ENCODE measurements at regions of chr12 and their contacts with region 1.

Region 1: GRCh38 chr12:54368709-54369583 is 4.7 kb upstream of the GPR84 start:
- DNase-seq: peak; percentile 72 to 84
- H3K4me3 ChIP-seq: no peak overlapping the region
- H3K27ac ChIP-seq: no peak overlapping the region
- H3K4me1 ChIP-seq: peaks cover 13% of the 10 kb centered on the region
- H3K27me3 ChIP-seq: no peaks in the 10 kb centered on the region
- CTCF ChIP-seq: peak; percentile 93

Region 2: GRCh38 chr12:54259194-54260011 is 109.5 kb before region 1 on chr12:
- CTCF ChIA-PET with region 1: no interaction called
- POLR2A ChIA-PET with region 1: no interaction called
- intact Hi-C with region 1: loop called (anchors 10 kb)
- DNase-seq: no peak
- H3K4me3 ChIP-seq: no peak overlapping the region
- H3K27ac ChIP-seq: no peak overlapping the region
- H3K4me1 ChIP-seq: peaks cover 10% of the 10 kb centered on the region; the same call in 1 of the 2 replicates
- H3K27me3 ChIP-seq: no peaks in the 10 kb centered on the region
- CTCF ChIP-seq: no peak

Region 3: DNA sequence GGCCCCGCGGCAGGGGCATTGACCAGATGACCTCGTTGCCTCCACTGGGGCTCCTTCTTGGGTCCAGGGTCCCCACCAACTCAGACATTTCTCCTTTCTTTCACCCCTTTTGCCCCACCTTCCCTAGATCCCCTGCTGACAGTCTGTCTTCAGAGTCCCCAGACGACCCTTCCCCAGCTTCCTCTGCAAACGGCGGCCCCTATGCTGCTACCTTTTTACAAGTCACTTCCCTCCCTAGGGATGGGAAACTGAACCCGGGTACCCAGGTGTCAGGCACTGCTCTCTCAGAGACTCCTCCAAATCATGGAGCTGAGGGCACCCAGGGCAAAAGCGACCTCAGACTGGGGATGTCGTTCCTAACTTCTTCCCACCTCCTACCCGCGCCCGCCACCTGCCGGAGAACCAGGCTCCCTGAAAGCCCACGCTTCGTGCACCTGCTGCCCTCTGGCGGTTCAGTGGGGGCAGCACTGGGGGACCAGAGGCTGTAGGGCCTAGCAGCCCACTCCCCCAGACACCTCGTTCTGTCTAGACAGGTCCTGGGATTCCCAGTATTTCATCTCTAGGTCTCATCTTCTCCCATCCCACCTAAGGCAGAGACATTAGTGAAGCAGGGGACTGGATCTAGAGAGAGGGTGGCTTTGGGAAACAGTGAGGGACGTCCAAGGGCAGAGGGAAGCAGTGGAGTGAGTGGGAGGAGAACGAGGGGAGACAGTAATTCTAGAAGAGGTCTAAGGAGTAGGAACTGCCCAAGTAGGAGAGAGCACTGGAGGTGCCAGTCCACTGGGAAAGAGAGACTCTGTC is 10.7 kb after region 1 on chr12:
- CTCF ChIA-PET with region 1: interaction called, 19 read pairs
- POLR2A ChIA-PET with region 1: interaction called, 7 read pairs
- intact Hi-C with region 1: loop called (anchors 1 kb)
- DNase-seq: peak; percentile 73 to 91
- H3K4me3 ChIP-seq: peak overlapping the region; percentile 59; the same call in 1 of the 2 replicates
- H3K27ac ChIP-seq: no peak overlapping the region
- H3K4me1 ChIP-seq: peaks cover 29% of the 10 kb centered on the region
- H3K27me3 ChIP-seq: no peaks in the 10 kb centered on the region
- CTCF ChIP-seq: peak; percentile 100

Region 4: DNA sequence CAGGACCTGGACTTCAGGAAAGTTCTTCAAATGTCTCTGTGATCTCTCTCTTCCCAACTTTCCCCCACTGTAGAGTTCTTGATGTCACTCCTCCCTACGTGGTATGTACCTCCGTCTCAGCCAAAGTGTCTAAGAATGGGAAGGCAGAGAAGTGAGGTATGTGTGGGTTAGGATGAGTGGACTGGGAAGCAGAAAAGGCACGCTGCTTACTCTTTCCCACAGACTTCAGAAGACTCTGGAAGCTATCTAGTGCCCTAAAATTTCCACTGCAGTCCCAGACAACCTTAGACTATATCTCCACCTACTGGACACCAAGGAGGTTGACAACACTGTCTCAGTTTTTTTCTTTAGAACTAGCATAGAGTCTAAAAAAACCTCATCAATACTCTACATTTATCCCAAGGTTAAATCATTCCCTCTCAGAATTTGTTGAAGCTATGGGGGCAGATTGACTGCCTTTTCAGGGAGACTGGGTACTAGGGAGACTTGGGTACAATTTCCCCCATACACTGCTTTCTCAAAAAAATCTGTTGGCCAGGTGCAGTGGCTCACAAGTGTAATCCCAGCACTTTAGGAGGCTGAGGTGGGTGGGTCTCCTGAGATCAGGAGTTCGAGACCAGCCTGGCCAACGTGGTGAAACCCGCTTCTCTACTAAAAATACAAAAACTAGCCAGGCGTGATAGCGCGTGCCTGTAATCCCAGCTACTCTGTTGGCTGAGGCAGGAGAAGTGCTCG is 70.7 kb after region 1 on chr12:
- CTCF ChIA-PET with region 1: no interaction called
- POLR2A ChIA-PET with region 1: no interaction called
- intact Hi-C with region 1: loop called (anchors 1 kb)
- DNase-seq: peak in 1 of 2 experiments; percentile 55
- H3K4me3 ChIP-seq: no peak overlapping the region
- H3K27ac ChIP-seq: no peak overlapping the region
- H3K4me1 ChIP-seq: 0 out of 2 replicates have a peak, but pooled peaks cover 8% of the 10 kb centered on the region
- H3K27me3 ChIP-seq: no peaks in the 10 kb centered on the region
- CTCF ChIP-seq: peak; percentile 85